Activated CD4-positive, alpha-beta T cell treated with anti-CD3 and anti-CD28 coated beads for 36 hours (primary cell): ENCODE measurements at regions of chr6 and their contacts with region 1.

Region 1: DNA sequence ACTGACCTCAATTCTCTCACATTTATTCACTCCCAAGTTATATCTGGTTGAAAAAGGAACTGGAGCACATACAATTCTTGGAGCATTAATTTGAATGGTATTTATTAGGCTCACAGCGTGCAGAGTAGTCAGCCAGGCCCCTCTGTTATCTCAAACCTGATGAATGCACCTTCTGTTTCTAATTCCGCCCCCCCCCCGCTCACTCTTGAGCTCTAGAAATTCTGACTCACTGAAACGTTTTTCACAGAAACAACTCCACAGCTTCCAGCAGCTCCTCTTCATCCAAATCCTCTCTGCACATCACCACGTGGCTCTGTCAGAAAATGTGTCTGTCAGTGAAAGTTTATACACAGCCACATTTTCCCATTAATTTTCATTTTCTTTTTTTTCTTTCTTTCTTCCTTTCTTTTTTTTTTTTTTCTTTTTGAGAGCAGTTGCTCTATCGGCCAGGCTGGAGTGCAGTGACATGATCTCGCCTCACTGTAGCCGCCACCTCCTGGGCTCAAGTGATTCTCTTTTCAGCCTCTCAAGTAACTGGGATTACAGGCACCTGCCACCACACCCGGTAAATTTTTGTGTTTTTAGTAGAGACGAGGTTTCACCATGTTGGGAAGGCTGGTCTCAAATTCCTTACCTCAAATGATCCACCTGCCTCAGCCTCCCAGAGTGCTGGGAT is 109.4 kb downstream of the TBXT start:
- DNase-seq: no peak
- ATAC-seq: no peak
- H3K4me3 Mint-ChIP-seq: no peak overlapping the region
- H3K27ac Mint-ChIP-seq: no peak overlapping the region
- H3K4me1 Mint-ChIP-seq: no peaks in the 10 kb centered on the region
- H3K27me3 Mint-ChIP-seq: peaks cover 6% of the 10 kb centered on the region

Region 2: DNA sequence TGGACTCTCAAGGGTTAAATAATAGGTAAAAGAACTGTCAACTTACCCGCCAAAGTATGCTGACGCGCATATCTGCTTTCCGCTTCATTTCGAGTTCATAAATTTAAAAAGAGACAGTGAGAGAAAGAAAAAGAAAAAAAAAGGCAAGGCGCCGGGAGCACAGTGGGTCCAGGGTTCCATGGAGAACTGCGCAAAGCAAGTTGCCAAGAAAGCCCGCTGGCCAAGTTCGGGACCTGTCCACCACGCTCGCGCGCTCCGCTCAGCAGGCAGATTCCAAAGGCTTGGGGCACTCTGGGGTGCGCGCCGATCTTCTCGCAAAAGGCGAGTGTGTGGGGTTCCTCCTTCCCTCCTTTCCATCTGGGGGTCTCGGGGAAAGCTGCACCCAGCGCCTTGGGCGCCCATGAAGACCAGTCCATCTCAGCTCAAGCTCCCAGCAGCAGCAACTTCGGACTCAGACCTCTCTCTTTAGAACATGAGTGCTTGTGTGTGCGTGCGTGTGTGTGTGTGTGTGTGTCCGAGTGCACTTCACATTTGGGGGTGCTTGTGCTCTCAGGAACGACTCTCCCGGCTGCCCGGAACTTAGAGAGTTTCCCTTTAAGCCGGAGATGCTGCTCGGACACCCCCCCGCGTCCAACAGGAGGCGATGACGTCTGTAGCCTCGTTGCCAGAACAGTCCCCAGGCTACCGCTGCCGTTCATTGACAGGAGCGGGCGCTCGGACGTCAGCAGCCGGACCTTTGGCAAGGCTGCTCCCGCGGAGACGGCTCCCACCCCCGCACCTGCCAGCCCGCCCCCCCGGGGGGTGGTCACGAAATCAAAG is 70.5 kb before region 1 on chr6:
- CTCF ChIA-PET with region 1: no interaction called
- POLR2A ChIA-PET with region 1: no interaction called
- intact Hi-C with region 1: loop called in 1 of 2 experiments (anchors 10 kb)
- DNase-seq: no peak
- ATAC-seq: no peak
- H3K4me3 Mint-ChIP-seq: no peak overlapping the region
- H3K27ac Mint-ChIP-seq: no peak overlapping the region
- H3K4me1 Mint-ChIP-seq: peaks cover 5% of the 10 kb centered on the region
- H3K27me3 Mint-ChIP-seq: peaks cover 40% of the 10 kb centered on the region